Activated T-helper 1 cell treated with anti-CD3 and anti-CD28 coated beads, Interleukin-12 subunit alpha, Interleukin-12 subunit beta, Interleukin-2, Interleukin-4 antibody, amounts not matched to agents 30 ng/mL and 10 ng/mL and 1 ng/mL, durations not matched to agents 14 hours and 24 hours and 36 hours (primary cell): ENCODE measurements at regions of chr19 and their contacts with region 1.

Region 1: DNA sequence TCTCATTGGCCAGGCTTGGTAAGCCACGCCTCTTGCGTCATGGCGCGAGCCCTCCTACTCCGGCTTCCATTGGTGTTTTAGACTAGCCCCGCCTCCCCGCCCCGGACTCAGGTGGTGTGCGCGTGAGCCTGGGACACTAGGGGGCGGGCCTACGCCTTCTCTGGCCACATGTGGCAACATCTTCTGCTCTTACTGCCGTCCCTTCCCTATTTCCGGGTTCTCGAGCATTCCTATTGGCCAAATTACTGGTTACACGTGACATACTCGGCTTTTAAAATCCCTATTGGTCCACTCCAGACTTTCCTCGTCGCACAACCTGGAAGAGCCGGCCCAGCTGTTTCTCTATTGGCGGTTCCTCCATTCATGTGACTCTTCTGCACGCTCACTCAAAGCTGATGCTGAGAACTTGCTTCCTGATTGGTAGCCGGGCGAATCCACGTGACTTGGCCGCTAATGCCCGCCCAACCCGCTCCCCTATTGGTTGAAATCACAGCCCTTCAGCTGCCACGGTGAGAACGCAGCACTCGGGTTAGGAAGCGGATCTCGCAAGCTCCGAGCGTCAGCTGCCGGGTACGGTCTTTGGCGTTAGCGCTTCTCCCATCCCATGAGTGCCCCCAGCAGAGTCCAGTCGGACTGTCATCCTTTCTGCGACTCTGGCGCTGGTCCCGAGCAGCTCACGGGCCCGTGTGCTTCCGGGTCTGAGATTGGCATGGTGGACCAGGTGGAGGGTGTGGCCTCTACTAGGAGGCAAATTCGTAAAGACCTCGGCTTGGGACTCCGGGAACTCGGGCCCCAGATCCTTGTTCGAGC is at the start of gene BLOC1S3:
- DNase-seq: peak; percentile 100
- H3K4me3 Mint-ChIP-seq: peak within 1 kb of the TSS; percentile 88
- H3K27ac Mint-ChIP-seq: peak within 1 kb of the TSS; percentile 88
- H3K4me1 Mint-ChIP-seq: peaks cover 19% of the 10 kb centered on the region
- H3K27me3 Mint-ChIP-seq: no peaks in the 10 kb centered on the region
- total RNA-seq, gene BLOC1S3: 10.4 and 10.5 TPM in 2 replicates

Region 2: GRCh38 chr19:44954824-44955586 is 223.5 kb before region 1 on chr19 and contains the start of gene CLPTM1:
- intact Hi-C with region 1: loop called (anchors 1 kb)
- DNase-seq: peak; percentile 93
- H3K4me3 Mint-ChIP-seq: peak within 1 kb of the TSS; percentile 96
- H3K27ac Mint-ChIP-seq: peak within 1 kb of the TSS; percentile 93
- H3K4me1 Mint-ChIP-seq: peaks cover 40% of the 10 kb centered on the region
- H3K27me3 Mint-ChIP-seq: no peaks in the 10 kb centered on the region
- total RNA-seq, gene CLPTM1: 86.1 and 93.1 TPM in 2 replicates

Region 3: DNA sequence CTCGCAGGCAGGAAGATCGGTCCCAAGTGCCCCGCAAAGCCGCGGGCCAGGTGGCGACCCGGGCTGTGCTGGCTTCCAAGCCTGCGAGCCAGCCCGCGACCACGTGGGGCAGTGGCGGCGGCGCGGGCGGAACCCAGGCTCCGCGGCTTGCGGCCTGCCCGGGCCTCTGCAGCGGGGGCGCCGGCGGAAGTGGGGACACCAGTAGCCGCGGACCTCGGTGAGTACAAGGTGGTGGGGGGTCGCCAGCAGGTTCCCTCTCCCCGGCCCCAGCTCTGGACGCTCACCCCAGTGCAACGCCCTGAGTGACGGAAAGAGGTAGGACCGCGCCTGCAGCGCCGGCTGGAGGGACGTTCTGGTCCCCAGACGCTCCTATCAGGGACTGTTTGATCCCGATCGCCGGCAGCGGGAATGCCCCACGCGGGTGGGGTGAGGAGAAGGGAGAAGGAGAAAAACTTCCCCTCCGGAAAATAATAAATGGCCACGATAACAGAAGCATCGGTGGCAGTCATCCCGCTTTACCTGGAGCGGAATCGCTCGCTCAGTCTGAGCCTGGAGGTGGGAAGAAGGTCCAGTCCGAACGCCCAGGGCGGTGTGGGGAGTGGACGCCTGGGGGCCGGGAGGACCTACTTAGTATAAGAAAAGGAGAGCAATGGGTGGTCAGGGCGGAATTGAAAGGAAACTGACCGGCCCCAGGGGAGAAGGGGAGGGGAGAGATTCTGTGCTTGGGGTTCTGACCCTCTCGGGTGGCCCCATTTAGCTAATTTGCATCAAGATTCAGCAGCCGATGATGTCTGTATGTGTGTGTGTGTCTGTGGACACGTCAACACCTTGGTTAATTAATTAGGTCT is 99.2 kb before region 1 on chr19 and contains the start of gene GEMIN7:
- intact Hi-C with region 1: loop called (anchors 2 kb)
- DNase-seq: peak; percentile 76
- H3K4me3 Mint-ChIP-seq: peak within 1 kb of the TSS; percentile 99
- H3K27ac Mint-ChIP-seq: peak within 1 kb of the TSS; percentile 94
- H3K4me1 Mint-ChIP-seq: peaks cover 40% of the 10 kb centered on the region
- H3K27me3 Mint-ChIP-seq: no peaks in the 10 kb centered on the region
- total RNA-seq, gene GEMIN7: 46.8 and 53.6 TPM in 2 replicates

Region 4: DNA sequence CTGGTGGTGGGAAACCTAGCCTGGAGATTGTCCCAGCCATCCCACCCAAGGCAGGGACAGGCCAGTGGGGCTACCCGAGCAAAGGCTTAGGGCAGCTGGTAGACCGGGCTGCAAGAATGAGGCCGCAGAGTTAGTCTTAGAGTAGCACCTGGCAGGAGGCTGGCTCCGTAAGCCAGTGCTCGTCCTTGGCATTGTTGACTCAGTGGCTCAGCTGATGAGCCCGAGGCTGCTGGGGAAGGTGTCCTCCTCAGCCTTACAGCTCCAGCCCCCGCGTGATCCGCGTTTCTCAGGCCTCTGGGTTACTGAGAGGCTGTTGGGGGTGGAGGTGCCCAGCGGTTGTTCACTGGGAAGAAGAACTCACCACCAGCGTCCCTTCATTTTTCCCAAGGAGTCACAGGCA is 60.8 kb before region 1 on chr19:
- intact Hi-C with region 1: no loop called
- DNase-seq: no peak
- H3K4me3 Mint-ChIP-seq: no peak overlapping the region
- H3K27ac Mint-ChIP-seq: peak overlapping the region; percentile 71
- H3K4me1 Mint-ChIP-seq: peaks cover 52% of the 10 kb centered on the region
- H3K27me3 Mint-ChIP-seq: no peaks in the 10 kb centered on the region

Region 5: DNA sequence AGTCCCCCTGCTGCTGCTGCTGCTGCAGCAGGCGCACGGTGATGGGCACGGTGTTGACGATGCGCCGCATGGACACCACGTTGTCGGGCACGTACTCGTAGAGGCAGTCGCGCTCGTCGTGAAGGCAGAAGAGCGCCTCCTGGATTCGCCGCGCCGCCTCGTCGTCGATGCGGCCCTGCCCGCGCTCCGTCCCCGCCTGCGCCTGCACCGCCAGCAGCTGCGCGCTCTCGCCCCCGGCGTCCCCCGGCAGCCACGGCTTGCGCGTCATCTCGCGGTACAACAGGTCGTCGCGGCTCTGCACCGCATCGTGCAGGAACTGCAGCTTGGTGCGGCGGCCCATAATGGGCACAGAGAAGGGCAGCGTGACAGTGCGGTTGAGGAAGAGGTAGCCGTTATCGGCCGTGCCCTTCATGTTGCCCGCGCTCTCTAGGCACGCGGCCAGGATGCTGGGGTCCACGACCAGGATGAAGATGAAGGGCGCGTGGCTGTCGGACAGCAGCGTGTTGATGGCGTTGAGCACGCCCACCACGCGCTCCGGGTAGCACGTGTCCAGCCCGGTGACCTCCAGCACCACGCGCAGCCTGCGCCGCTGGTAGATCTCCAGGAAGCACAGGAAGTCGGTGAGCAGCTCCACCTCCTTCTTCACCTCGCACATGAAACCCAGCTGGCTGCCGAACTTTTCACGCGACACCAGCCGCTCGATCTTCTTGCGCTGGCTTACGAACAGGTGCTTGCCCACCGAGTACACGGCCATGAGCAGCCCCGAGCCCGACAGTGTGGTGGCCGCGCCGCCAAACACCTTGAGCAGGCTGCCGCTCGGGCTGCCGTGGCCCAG is 25.7 kb before region 1 on chr19:
- intact Hi-C with region 1: no loop called
- DNase-seq: peak; percentile 33
- H3K4me3 Mint-ChIP-seq: peak overlapping the region; percentile 70
- H3K27ac Mint-ChIP-seq: peak overlapping the region; percentile 40
- H3K4me1 Mint-ChIP-seq: peaks cover 15% of the 10 kb centered on the region
- H3K27me3 Mint-ChIP-seq: peaks cover 23% of the 10 kb centered on the region

Region 6: DNA sequence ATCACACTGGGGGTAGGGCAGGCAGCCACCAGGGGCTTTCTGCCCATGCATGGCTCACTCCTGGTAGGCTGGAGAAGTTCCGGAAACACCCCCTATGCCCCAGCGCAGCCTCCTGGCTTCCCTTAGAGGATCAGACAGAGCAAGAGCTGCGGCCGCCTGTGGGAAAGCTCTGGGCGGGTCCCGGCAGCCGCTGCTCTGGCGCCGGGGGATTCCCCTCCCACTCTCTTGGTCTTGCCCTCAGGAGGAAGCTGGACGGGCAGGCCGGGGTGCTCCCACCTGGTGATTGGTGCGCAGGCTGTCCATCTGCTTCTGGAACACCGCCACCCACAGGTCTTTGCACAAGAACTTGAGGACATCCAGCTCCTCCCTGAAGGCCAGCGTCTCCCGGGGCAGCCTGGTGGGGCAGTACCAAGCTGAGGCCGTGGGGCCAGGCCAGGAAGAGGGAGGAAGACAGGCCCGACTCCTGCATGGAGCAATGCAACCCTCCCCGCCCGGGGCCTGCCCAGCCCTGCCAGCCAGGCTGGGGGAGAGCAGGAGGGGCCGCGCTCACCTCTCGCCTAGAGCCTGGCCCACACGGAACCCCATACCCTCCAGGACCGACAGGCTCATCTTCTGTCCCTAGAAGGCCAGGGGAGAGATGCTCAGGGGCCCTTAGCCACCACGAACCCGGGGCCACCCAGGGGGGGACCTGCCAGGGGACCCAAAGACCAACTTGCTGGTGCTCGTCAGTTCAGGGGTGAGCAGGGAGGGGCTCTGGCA is 13.7 kb before region 1 on chr19:
- intact Hi-C with region 1: loop called (anchors 1 kb)
- DNase-seq: peak; percentile 60
- H3K4me3 Mint-ChIP-seq: no peak overlapping the region
- H3K27ac Mint-ChIP-seq: no peak overlapping the region
- H3K4me1 Mint-ChIP-seq: peaks cover 16% of the 10 kb centered on the region
- H3K27me3 Mint-ChIP-seq: peaks cover 4% of the 10 kb centered on the region

Region 7: GRCh38 chr19:45276284-45276687 is 97.8 kb after region 1 on chr19:
- intact Hi-C with region 1: no loop called
- DNase-seq: no peak
- H3K4me3 Mint-ChIP-seq: no peak overlapping the region
- H3K27ac Mint-ChIP-seq: no peak overlapping the region
- H3K4me1 Mint-ChIP-seq: no peaks in the 10 kb centered on the region
- H3K27me3 Mint-ChIP-seq: no peaks in the 10 kb centered on the region

Region 8: DNA sequence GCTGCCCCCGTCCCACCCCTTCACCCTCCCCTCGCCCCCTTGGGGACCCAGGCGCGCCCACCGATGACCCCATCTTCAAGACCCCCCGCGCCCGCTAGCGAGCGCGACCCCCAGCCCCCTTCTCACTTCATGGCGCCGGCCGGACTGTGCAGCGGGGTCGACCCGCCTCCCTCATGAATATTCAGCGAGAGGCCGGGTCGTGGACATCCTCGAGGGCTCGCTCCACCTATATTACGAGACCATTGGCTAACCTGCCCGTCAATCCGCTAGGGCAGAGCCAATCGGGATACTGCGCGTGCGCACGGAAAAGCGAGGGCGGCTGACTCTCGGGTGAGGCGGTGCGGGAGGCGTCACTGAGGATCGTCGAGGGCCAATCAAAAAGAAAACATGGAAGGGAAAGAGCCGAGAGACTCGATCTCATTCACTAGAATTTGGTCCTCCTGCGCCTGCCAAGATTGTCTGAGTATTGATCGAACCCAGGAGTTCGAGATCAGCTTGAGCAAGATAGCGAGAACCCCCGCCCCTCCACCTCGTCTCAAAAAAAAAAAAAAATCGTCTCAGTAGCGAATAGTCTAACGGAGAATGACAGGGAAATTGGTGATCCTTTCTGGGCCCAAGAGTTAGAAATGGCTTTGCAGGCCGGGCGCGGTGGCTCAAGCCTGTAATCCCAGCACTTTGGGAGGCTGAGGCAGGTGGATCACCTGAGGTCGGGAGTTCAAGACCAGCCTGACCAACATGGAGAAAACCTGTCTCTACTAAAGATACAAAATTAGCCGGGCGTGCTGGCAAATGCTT is 192.1 kb after region 1 on chr19 and contains the start of gene ERCC2:
- intact Hi-C with region 1: loop called (anchors 1 kb)
- DNase-seq: peak; percentile 100
- H3K4me3 Mint-ChIP-seq: peak within 1 kb of the TSS; percentile 89
- H3K27ac Mint-ChIP-seq: peak within 1 kb of the TSS; percentile 95
- H3K4me1 Mint-ChIP-seq: peaks cover 15% of the 10 kb centered on the region
- H3K27me3 Mint-ChIP-seq: no peaks in the 10 kb centered on the region
- total RNA-seq, gene ERCC2: 30.5 and 32.8 TPM in 2 replicates

Region 9: DNA sequence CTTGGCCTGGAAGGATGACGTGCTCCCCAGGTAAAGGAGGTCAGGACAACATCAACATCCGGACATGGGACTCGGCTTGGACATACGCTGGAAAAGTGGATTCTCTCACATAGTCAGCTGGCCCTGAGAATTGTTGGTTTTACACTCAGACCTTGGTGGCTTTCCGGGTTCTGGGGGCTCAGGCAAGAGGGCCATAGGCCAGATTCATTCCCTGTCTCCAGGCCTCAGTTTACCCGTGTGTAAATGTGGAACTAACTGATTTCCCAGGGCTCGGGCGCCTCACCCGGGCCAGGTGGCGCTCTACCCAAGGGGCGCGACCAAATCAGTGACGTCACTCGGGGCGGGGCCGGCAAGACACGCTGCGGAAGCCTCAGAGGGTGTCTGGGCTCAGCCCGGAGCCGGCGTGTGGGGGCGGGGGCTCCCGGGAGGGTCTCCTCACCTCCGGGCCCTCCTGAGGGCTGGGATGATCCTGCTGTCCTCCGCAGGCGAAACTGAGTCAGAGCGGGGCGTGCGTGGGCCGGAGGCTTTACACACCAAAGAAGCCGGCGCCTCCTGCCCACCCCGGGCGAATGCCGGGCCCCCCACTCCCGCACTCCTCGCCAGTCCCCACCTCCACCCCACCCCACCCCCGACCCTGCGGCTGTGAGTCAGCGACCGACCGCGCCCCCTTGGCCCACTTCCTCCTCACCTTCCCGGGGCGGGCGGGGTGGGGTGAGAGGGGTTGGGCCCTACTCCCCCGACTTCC is 328.0 kb after region 1 on chr19:
- intact Hi-C with region 1: loop called (anchors 5 kb)
- DNase-seq: peak; percentile 94
- H3K4me3 Mint-ChIP-seq: peak overlapping the region; percentile 95
- H3K27ac Mint-ChIP-seq: peak overlapping the region; percentile 95
- H3K4me1 Mint-ChIP-seq: peaks cover 20% of the 10 kb centered on the region
- H3K27me3 Mint-ChIP-seq: peaks cover 3% of the 10 kb centered on the region

Region 10: GRCh38 chr19:46850228-46851203 is 1672.0 kb after region 1 on chr19 and contains the start of gene AP2S1:
- intact Hi-C with region 1: loop called (anchors 10 kb)
- DNase-seq: peak; percentile 92
- H3K4me3 Mint-ChIP-seq: peak within 1 kb of the TSS; percentile 92
- H3K27ac Mint-ChIP-seq: peak within 1 kb of the TSS; percentile 86
- H3K4me1 Mint-ChIP-seq: peaks cover 24% of the 10 kb centered on the region
- H3K27me3 Mint-ChIP-seq: peaks cover 6% of the 10 kb centered on the region
- total RNA-seq, gene AP2S1: 96.4 and 98.1 TPM in 2 replicates